ENCODE measurements at regions of chr10 and their contacts with region 1.

Region 1: GRCh38 chr10:3761021-3761686 is 23.9 kb downstream of the KLF6 start:
- DNase-seq: peak; percentile 36
- ATAC-seq: no peak
- H3K4me3 ChIP-seq: no peak overlapping the region
- H3K27ac ChIP-seq: peak overlapping the region; percentile 100
- H3K4me1 ChIP-seq: peaks cover 77% of the 10 kb centered on the region
- H3K27me3 ChIP-seq: no peaks in the 10 kb centered on the region
- CTCF ChIP-seq: no peak

Region 2: DNA sequence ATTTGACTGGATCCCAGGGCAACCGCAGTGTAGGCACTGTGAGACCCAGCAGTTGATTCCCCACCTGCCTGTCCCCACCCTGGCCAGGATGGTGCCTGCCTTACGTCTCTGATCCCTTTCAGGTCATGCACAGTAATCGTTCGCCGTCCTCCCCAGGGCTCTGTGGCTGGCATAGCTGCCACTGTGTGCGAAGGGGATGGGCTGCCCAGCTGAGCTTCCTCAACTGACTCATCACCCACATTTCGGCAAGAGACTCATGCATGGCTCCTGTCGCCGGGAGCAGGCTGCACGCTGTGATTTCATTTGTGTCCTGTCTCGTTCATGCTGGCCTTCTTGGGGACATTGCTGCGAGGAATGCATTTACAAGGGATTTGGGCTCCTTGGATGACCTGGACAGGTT is 228.5 kb before region 1 on chr10:
- CTCF ChIA-PET with region 1: no interaction called
- POLR2A ChIA-PET with region 1: no interaction called
- intact Hi-C with region 1: loop called (anchors 5 kb)
- DNase-seq: peak; percentile 67
- ATAC-seq: peak; percentile 94
- H3K4me3 ChIP-seq: peak overlapping the region; percentile 56; the same call in 1 of the 2 replicates
- H3K27ac ChIP-seq: peak overlapping the region; percentile 95
- H3K4me1 ChIP-seq: peaks cover 39% of the 10 kb centered on the region
- H3K27me3 ChIP-seq: no peaks in the 10 kb centered on the region
- CTCF ChIP-seq: no peak

Measured in PC-3 (cell line).